OCI-LY7 (cell line): ENCODE measurements at regions of chr15 and their contacts with region 1.

Region 1: GRCh38 chr15:23734862-23735261 is 47.8 kb upstream of the NDN start:
- DNase-seq: no peak
- H3K4me3 ChIP-seq: no peak overlapping the region
- H3K27ac ChIP-seq: no peak overlapping the region
- H3K4me1 ChIP-seq: no peaks in the 10 kb centered on the region
- CTCF ChIP-seq: no peak

Region 2: DNA sequence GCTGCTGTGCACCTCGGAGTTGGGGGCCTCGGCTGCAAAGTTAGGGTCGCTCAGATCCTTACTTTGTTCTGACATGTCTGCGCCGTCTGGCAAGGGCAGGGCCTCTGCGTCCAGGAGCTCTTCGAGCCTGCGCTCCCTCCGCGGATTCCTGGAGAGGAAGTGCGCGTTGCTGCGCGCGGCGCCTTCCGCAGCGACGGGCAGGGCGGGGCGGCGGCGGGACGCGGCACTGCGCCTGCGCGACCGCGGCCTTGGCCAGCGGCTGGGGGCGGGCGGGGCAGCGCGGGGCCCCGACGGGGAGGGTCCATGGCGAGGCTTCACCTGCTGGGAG is 47.8 kb before region 1 on chr15 and contains the start of gene NDN:
- CTCF ChIA-PET with region 1: no interaction called
- POLR2A ChIA-PET with region 1: no interaction called
- intact Hi-C with region 1: loop called (anchors 10 kb)
- DNase-seq: no peak
- H3K4me3 ChIP-seq: no peak within 1 kb of the TSS
- H3K27ac ChIP-seq: no peak within 1 kb of the TSS
- H3K4me1 ChIP-seq: no peaks in the 10 kb centered on the region
- CTCF ChIP-seq: no peak
- total RNA-seq, gene NDN: not detected in 2 replicates

Region 3: GRCh38 chr15:23954931-23955330 is 220.1 kb after region 1 on chr15:
- CTCF ChIA-PET with region 1: no interaction called
- POLR2A ChIA-PET with region 1: no interaction called
- intact Hi-C with region 1: no loop called
- DNase-seq: no peak
- H3K4me3 ChIP-seq: no peak overlapping the region
- H3K27ac ChIP-seq: no peak overlapping the region
- H3K4me1 ChIP-seq: no peaks in the 10 kb centered on the region
- CTCF ChIP-seq: no peak